ENCODE measurements at regions of chr12 and their contacts with region 1.

Region 1: DNA sequence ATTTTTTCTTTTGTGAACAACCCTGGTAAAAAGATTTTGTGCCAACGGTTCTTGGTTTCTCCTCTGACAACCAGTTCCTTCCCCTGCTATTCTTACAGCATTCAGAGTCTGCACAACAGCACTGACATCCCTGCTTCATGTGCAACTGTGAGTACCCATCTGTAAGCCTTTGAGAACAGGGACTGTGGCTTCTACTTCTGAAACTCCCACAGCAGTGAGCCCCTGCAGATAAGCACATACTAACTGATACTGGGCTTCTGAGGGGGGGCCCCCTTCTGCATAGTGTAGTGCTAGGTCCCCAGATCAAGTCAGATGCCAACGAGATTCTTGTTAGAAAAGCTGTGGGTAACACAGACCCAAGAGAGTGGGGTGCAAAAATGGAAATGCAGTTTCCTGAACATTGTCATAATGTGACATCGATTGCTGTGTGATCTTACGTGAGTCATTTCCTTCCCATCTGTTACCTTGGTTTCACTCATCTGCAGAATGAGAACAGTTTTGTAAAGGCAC is 11.1 kb upstream of the NINJ2 start:
- DNase-seq: peak; percentile 52 to 87
- ATAC-seq: peak; percentile 94 to 95 (median 95)
- H3K4me3 ChIP-seq: no peak overlapping the region
- H3K4me3 Mint-ChIP-seq: peak overlapping the region; percentile 68
- H3K27ac ChIP-seq: peak overlapping the region; percentile 79
- H3K27ac Mint-ChIP-seq: peak overlapping the region; percentile 77 to 93
- H3K4me1 ChIP-seq: peaks cover 26% of the 10 kb centered on the region
- H3K4me1 Mint-ChIP-seq: peaks cover 29 to 36% of the 10 kb centered on the region in 2 donors
- H3K27me3 ChIP-seq: no peaks in the 10 kb centered on the region
- H3K27me3 Mint-ChIP-seq: no peaks in the 10 kb centered on the region
- CTCF ChIP-seq: no peak

Region 2: DNA sequence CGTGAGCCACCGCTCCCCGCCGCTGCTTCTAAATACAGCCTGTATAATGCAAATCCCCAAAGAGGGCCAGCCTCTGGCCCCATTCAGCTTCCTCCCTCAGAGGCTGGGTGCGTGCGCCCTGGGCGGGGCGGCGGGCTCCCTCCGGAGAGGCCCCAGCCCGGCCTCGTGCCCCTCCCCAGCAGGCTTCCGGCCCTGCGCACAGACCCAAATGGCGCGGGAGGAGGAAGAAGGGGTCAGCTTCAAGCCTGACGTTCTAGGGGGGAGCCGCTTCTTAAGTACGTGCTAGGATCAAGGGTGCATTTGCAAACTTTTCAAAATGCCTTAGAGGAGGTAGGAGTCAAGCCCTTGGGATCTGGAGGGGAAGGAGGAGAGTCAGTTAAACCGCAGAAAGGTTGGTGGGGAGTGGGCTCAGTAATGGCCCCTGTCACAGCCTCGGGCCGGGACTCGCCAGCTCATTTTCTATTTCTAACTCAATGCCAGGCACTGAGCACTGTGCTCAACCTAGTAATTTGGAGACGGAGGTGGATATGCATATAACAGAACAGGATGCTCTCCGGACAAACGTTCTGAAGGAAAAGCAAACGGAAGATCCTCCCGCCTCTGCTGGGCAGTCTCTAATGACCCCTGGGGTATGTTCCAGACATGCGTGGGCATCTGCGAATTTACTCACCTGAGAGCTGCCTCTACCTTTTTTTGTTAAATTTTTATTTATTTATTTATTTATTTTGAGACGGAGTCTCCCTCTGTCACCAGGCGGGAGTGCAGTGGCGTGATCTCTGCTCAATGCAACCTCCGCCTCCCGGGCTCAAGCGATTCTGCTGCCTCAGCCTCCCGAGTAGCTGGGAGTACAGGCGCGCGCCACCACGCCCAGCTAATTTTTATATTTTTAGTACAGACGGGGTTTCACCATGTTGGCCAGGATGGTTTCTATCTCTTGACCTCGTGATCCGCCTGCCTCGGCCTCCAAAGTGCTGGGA is 43.4 kb before region 1 on chr12:
- intact Hi-C with region 1: loop called (anchors 2 kb)
- DNase-seq: peak in 1 of 2 donors; percentile 68
- ATAC-seq: peak in 2 of 3 donors; percentile 92 to 97
- H3K4me3 ChIP-seq: peak overlapping the region; percentile 45
- H3K4me3 Mint-ChIP-seq: no peak overlapping the region
- H3K27ac ChIP-seq: peak overlapping the region; percentile 68
- H3K27ac Mint-ChIP-seq: peak overlapping the region in 1 of 2 donors; percentile 96
- H3K4me1 ChIP-seq: no peaks in the 10 kb centered on the region
- H3K4me1 Mint-ChIP-seq: peaks cover 0 to 22% of the 10 kb centered on the region in 2 donors
- H3K27me3 ChIP-seq: no peaks in the 10 kb centered on the region
- H3K27me3 Mint-ChIP-seq: no peaks in the 10 kb centered on the region
- CTCF ChIP-seq: no peak

Region 3: DNA sequence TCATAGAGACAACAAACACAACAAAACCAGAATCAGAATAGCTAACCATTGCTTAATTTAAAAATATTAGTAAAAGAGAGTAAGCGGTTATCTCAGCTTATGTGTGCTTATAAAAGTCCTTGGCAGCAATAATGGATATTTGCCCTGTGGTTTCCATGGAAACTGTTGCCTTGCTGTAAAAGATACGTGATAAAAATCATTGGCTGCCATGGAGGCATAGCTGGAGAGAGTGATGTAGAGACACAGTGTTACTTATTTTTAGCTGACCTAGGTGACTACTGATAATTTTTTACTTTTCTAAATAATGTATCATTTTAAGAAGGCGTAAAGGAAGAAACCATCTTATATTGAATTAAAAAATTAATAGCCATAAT is 409.5 kb after region 1 on chr12:
- intact Hi-C with region 1: no loop called
- DNase-seq: no peak
- ATAC-seq: no peak
- H3K4me3 ChIP-seq: no peak overlapping the region
- H3K4me3 Mint-ChIP-seq: no peak overlapping the region
- H3K27ac ChIP-seq: no peak overlapping the region
- H3K27ac Mint-ChIP-seq: no peak overlapping the region
- H3K4me1 ChIP-seq: no peaks in the 10 kb centered on the region
- H3K4me1 Mint-ChIP-seq: peaks cover 0 to 6% of the 10 kb centered on the region in 2 donors
- H3K27me3 ChIP-seq: no peaks in the 10 kb centered on the region
- H3K27me3 Mint-ChIP-seq: no peaks in the 10 kb centered on the region
- CTCF ChIP-seq: no peak

Measured in natural killer cell (primary cell).